Endothelial cell of umbilical vein (primary cell): ENCODE measurements at regions of chr4 and their contacts with region 1.

Region 1: DNA sequence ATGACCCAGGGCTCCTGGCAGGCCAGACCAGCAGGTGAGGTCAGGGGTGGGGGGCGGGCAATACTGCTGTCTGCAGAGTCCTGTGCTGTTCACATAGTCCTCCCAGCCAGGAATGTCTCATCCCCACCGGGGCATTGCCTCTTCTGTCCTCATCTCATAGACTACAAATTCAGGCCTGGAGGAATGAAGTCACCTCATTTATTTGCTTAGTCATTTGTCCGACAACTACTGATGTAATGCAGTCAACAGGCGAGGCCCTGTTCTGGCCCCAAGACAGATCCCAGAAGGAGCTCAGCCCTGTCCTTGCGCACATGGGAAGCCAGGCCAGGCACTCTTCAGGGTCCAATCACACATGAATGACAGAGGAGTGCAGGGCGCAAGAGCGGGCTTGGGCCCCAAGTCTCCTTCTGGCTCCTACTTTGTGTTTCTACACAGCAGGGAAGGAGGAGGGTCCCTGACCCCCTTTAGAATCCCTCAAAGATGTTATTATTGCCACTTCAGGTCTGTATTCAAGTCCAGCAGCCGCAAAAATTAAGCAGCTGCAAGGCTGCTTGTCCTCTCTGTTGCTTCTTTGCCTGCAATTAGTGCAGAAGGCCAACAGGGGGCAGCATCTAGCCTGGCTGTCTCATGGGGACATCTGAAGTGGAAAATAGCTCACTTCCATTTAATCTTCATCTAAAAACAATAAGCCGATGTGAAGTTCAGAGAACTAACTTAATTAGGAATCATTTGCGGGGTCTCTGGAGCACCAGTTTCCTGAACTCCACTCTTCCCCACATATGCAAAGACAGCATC is 15.2 kb upstream of the HMX1 start:
- DNase-seq: no peak
- H3K4me3 ChIP-seq: no peak overlapping the region
- H3K27ac ChIP-seq: no peak overlapping the region
- H3K4me1 ChIP-seq: no peaks in the 10 kb centered on the region
- H3K27me3 ChIP-seq: peaks cover 23 to 25% of the 10 kb centered on the region in 2 experiments
- CTCF ChIP-seq: peak in 1 of 2 donors; percentile 19
- POLR2A ChIP-seq: no peak

Region 2: DNA sequence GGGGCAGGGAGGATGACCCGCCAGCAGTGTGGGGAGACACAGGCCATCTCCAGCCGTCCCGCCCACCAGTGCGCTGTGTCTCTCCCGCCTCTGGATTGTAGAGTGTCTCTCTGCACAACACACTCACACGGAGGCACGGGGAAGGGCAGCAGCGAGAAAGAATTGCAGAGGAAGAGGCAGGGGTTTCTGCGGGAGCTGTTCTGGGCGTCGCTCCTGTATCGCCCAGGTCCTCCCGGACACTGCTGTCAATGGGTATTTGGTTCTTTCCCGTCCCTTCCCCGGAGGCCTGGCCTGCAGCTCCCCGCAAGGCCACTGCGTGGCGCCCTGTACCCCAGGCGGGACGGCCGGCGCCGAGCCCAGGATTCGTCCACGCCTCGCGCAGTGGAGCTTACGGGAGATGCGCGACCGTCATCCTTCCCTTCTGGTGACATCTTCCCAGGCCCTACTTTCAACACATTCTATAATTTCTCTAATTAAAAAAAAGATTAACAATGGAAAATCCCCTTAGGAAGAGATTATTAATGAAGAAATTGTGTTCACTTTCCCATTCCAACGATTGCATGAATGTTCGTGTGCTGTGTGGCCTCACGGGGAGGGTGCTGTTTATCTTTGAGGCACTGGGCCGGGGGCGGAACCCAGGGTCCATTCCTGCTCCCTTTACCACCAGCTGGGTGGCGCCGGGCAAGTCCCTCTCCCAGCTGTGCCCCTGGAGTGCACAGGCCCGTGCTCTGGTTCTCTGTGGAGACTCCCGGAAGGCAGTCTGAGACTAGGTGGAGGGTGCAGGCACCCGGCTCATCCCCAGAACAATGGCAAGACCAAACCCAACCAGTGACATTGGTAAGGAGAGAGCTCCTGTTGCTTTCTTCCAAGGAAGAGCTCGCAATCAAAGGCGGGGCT is 198.5 kb before region 1 on chr4:
- CTCF ChIA-PET with region 1: interaction called, 10 read pairs
- POLR2A ChIA-PET with region 1: no interaction called
- dilution Hi-C with region 1: no loop called
- intact Hi-C with region 1: loop called (anchors 1 kb)
- DNase-seq: peak; percentile 4
- H3K4me3 ChIP-seq: no peak overlapping the region
- H3K27ac ChIP-seq: no peak overlapping the region
- H3K4me1 ChIP-seq: no peaks in the 10 kb centered on the region
- H3K27me3 ChIP-seq: no peaks in the 10 kb centered on the region
- CTCF ChIP-seq: peak; percentile 58 to 76
- POLR2A ChIP-seq: no peak

Region 3: GRCh38 chr4:8928074-8928473 is 41.3 kb after region 1 on chr4:
- CTCF ChIA-PET with region 1: no interaction called
- POLR2A ChIA-PET with region 1: no interaction called
- dilution Hi-C with region 1: no loop called
- intact Hi-C with region 1: no loop called
- DNase-seq: no peak
- H3K4me3 ChIP-seq: no peak overlapping the region
- H3K27ac ChIP-seq: no peak overlapping the region
- H3K4me1 ChIP-seq: no peaks in the 10 kb centered on the region
- H3K27me3 ChIP-seq: no peaks in the 10 kb centered on the region
- CTCF ChIP-seq: no peak
- POLR2A ChIP-seq: no peak